MCF 10A (cell line): ENCODE measurements at regions of chr12 and their contacts with region 1.

Region 1: DNA sequence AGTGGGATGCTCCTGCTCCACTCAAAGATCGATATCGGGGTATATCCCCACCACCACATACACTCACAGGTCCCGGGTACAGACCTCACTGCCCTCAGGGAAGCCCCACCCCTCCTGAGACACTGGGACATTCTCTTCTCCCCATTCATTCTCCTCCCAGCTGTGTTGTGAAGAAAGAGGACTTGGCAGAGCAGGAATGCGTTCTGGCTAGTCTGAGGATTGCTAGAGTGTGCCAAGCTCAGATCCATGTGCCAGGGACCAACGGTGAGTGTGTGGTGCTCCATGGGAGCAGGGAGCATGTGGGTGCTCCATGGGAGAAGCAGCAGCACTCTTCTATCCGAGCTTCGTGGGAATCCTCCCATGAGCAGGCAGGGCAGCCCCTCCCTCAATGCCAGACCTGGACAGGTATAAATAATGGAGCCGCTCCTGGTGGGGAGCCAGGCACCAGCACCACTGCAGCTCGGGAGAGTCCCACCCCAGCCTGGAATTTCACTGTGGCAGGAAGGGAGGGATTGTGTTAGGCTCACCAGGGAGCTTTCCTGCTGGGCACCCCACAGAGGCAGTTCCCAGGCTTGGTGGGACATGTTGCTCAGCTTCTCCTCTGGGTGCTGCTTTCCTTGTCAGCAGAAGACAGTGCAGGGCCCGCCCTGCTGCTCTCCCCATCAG is 2.3 kb upstream of the KRT5 start:
- DNase-seq: peak; percentile 98
- H3K4me3 Mint-ChIP-seq: peak overlapping the region; percentile 80
- H3K27ac Mint-ChIP-seq: peak overlapping the region; percentile 96
- H3K4me1 Mint-ChIP-seq: peaks cover 44% of the 10 kb centered on the region
- H3K27me3 Mint-ChIP-seq: no peaks in the 10 kb centered on the region
- CTCF ChIP-seq: no peak

Region 2: GRCh38 chr12:52156736-52157565 is 365.5 kb before region 1 on chr12:
- CTCF ChIA-PET with region 1: interaction called, 9 read pairs
- POLR2A ChIA-PET with region 1: interaction called, 373 read pairs
- intact Hi-C with region 1: loop called (anchors 5 kb)
- DNase-seq: peak; percentile 85
- H3K4me3 Mint-ChIP-seq: no peak overlapping the region
- H3K27ac Mint-ChIP-seq: peak overlapping the region; percentile 91
- H3K4me1 Mint-ChIP-seq: peaks cover 30% of the 10 kb centered on the region
- H3K27me3 Mint-ChIP-seq: no peaks in the 10 kb centered on the region
- CTCF ChIP-seq: peak; percentile 98

Region 3: GRCh38 chr12:52380271-52380694 is 142.2 kb before region 1 on chr12:
- CTCF ChIA-PET with region 1: interaction called, 10 read pairs
- POLR2A ChIA-PET with region 1: interaction called, 3 read pairs
- intact Hi-C with region 1: no loop called
- DNase-seq: peak; percentile 59
- H3K4me3 Mint-ChIP-seq: no peak overlapping the region
- H3K27ac Mint-ChIP-seq: no peak overlapping the region
- H3K4me1 Mint-ChIP-seq: no peaks in the 10 kb centered on the region
- H3K27me3 Mint-ChIP-seq: no peaks in the 10 kb centered on the region
- CTCF ChIP-seq: peak; percentile 59

Region 4: GRCh38 chr12:52582971-52583456 is 60.5 kb after region 1 on chr12:
- CTCF ChIA-PET with region 1: interaction called, 90 read pairs
- POLR2A ChIA-PET with region 1: interaction called, 315 read pairs
- intact Hi-C with region 1: loop called (anchors 1 kb)
- DNase-seq: peak; percentile 82
- H3K4me3 Mint-ChIP-seq: no peak overlapping the region
- H3K27ac Mint-ChIP-seq: no peak overlapping the region
- H3K4me1 Mint-ChIP-seq: peaks cover 26% of the 10 kb centered on the region
- H3K27me3 Mint-ChIP-seq: no peaks in the 10 kb centered on the region
- CTCF ChIP-seq: peak; percentile 76

Region 5: GRCh38 chr12:52870351-52871290 is 348.1 kb after region 1 on chr12:
- CTCF ChIA-PET with region 1: interaction called, 77 read pairs
- POLR2A ChIA-PET with region 1: interaction called, 675 read pairs
- intact Hi-C with region 1: loop called (anchors 2 kb)
- DNase-seq: peak; percentile 84
- H3K4me3 Mint-ChIP-seq: peak overlapping the region; percentile 14
- H3K27ac Mint-ChIP-seq: peak overlapping the region; percentile 90
- H3K4me1 Mint-ChIP-seq: peaks cover 77% of the 10 kb centered on the region
- H3K27me3 Mint-ChIP-seq: no peaks in the 10 kb centered on the region
- CTCF ChIP-seq: peak; percentile 95